GM12878 (cell line): ENCODE measurements at regions of chr12 and their contacts with region 1.

Region 1: DNA sequence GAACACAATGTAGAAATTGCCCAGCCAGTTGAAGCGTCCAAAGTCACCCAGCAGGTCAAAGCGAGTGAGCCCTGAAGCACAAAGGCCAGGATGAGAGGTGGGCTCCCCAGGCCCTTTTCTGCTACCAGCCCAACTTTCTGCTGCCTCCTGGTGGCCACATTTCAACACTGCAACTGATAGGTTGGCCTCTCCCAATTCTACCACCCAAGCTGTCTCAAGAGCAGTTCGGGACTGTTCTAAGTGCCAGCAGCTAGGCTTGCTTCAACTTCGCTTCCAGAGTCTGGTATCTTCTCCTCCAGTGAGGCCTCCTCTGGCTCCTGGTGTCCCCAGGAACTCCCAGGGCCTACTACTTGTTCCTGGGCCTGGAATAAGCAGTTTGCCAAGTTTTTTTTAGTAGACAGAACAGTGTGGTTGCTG is 3.4 kb upstream of the DHH start:
- DNase-seq: no peak
- ATAC-seq: peak; percentile 80
- H3K4me3 ChIP-seq: no peak overlapping the region
- H3K27ac ChIP-seq: no peak overlapping the region
- H3K4me1 ChIP-seq: no peaks in the 10 kb centered on the region
- H3K27me3 ChIP-seq: peaks cover 6 to 10% of the 10 kb centered on the region in 2 experiments
- CTCF ChIP-seq: peak; percentile 76 to 89 (median 84)
- EP300 ChIP-seq: no peak
- POLR2A ChIP-seq: no peak
- RAD21 ChIP-seq: peak; percentile 55

Region 2: GRCh38 chr12:49069507-49070346 is 28.3 kb before region 1 on chr12 and contains the start of gene RHEBL1:
- CTCF ChIA-PET with region 1: interaction called, 244 read pairs
- POLR2A ChIA-PET with region 1: interaction called, 7 read pairs
- RAD21 ChIA-PET with region 1: interaction called, 66 read pairs
- SMC1A ChIA-PET with region 1: interaction called, 64 read pairs
- in situ Hi-C with region 1: no loop called
- intact Hi-C with region 1: loop called (anchors 1 kb)
- DNase-seq: peak; percentile 94
- ATAC-seq: peak; percentile 99
- H3K4me3 ChIP-seq: peak within 1 kb of the TSS; percentile 93
- H3K27ac ChIP-seq: peak within 1 kb of the TSS; percentile 91
- H3K4me1 ChIP-seq: peaks cover 4% of the 10 kb centered on the region
- H3K27me3 ChIP-seq: no peaks in the 10 kb centered on the region
- CTCF ChIP-seq: peak; percentile 33 to 37 (median 36); a peak in 4 of 6 replicates
- EP300 ChIP-seq: peak in 1 of 2 experiments; percentile 30; a peak in 1 of 4 replicates
- POLR2A ChIP-seq: peak; percentile 79
- RAD21 ChIP-seq: no peak
- polyA plus RNA-seq, gene RHEBL1: 17.9 to 18.7 TPM

Region 3: DNA sequence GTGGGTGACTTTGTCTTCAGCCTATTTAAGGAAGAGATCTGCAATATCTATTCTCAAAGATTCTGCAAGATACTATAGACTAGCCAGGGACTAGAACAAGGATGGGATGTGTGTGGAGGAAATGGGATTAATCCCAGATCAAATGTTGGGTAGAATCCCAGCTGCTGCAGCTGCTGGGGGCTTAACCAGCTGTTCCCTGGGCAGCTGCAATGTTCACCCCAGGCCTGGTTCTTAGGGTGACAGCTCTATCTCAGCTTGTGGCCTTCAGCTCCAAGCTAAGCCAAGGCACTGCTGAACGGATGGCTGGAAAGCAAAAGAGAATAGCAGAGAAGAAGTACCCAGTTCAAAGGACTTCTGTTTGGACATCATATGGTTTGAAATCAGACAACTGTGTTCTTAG is 18.2 kb before region 1 on chr12:
- CTCF ChIA-PET with region 1: interaction called, 118 read pairs
- POLR2A ChIA-PET with region 1: no interaction called
- RAD21 ChIA-PET with region 1: interaction called, 5 read pairs
- SMC1A ChIA-PET with region 1: interaction called, 5 read pairs
- in situ Hi-C with region 1: no loop called
- intact Hi-C with region 1: no loop called
- DNase-seq: no peak
- ATAC-seq: no peak
- H3K4me3 ChIP-seq: no peak overlapping the region
- H3K27ac ChIP-seq: no peak overlapping the region
- H3K4me1 ChIP-seq: no peaks in the 10 kb centered on the region
- H3K27me3 ChIP-seq: no peaks in the 10 kb centered on the region; a peak in 1 of 4 replicates
- CTCF ChIP-seq: no peak
- EP300 ChIP-seq: no peak
- POLR2A ChIP-seq: no peak
- RAD21 ChIP-seq: no peak

Region 4: GRCh38 chr12:49110464-49111155 is 12.6 kb after region 1 on chr12 and contains the start of gene LMBR1L:
- CTCF ChIA-PET with region 1: interaction called, 53 read pairs
- POLR2A ChIA-PET with region 1: interaction called, 9 read pairs
- RAD21 ChIA-PET with region 1: no interaction called
- SMC1A ChIA-PET with region 1: interaction called, 12 read pairs
- in situ Hi-C with region 1: no loop called
- intact Hi-C with region 1: no loop called
- DNase-seq: peak; percentile 93
- ATAC-seq: peak; percentile 98
- H3K4me3 ChIP-seq: peak within 1 kb of the TSS; percentile 87
- H3K27ac ChIP-seq: peak within 1 kb of the TSS; percentile 70
- H3K4me1 ChIP-seq: peaks cover 9% of the 10 kb centered on the region
- H3K27me3 ChIP-seq: no peaks in the 10 kb centered on the region
- CTCF ChIP-seq: peak; percentile 36 to 60 (median 50); a peak in 5 of 6 replicates
- EP300 ChIP-seq: no peak
- POLR2A ChIP-seq: peak; percentile 91
- RAD21 ChIP-seq: 0 out of 2 replicates have a peak, but pooled peaks have one; percentile 32
- polyA plus RNA-seq, gene LMBR1L: 2.1 to 2.8 TPM

Region 5: GRCh38 chr12:49121047-49121696 is 23.1 kb after region 1 on chr12:
- CTCF ChIA-PET with region 1: interaction called, 11 read pairs
- POLR2A ChIA-PET with region 1: interaction called, 6 read pairs
- RAD21 ChIA-PET with region 1: interaction called, 3 read pairs
- SMC1A ChIA-PET with region 1: no interaction called
- in situ Hi-C with region 1: no loop called
- intact Hi-C with region 1: no loop called
- DNase-seq: no peak
- ATAC-seq: peak; percentile 52
- H3K4me3 ChIP-seq: no peak overlapping the region
- H3K27ac ChIP-seq: no peak overlapping the region
- H3K4me1 ChIP-seq: no peaks in the 10 kb centered on the region
- H3K27me3 ChIP-seq: no peaks in the 10 kb centered on the region
- CTCF ChIP-seq: peak; percentile 25 to 61 (median 36); a peak in 4 of 6 replicates
- EP300 ChIP-seq: no peak
- POLR2A ChIP-seq: no peak
- RAD21 ChIP-seq: peak; percentile 49